ENCODE measurements at regions of chr18 and their contacts with region 1.

Region 1: GRCh38 chr18:158128-159036 is at the start of gene USP14:
- DNase-seq: peak; percentile 99 to 100 (median 100)
- ATAC-seq: peak; percentile 93
- H3K4me3 ChIP-seq: peak within 1 kb of the TSS; percentile 97
- H3K27ac ChIP-seq: peak within 1 kb of the TSS; percentile 94
- H3K4me1 ChIP-seq: peaks cover 19 to 25% of the 10 kb centered on the region in 2 experiments; a peak in 4 of 5 replicates
- H3K27me3 ChIP-seq: no peaks in the 10 kb centered on the region
- CTCF ChIP-seq: peak in 2 of 3 experiments; percentile 27 to 87; a peak in 4 of 6 replicates
- EP300 ChIP-seq: no peak; the same call in 1 of the 2 replicates
- POLR2A ChIP-seq: peak; percentile 90
- RAD21 ChIP-seq: peak; percentile 25 to 42; a peak in 3 of 4 replicates
- polyA plus RNA-seq, gene USP14: 34.4 to 40.3 TPM

Region 2: GRCh38 chr18:111292-112014 is 46.9 kb before region 1 on chr18:
- CTCF ChIA-PET with region 1: no interaction called
- POLR2A ChIA-PET with region 1: no interaction called
- in situ Hi-C with region 1: no loop called
- intact Hi-C with region 1: loop called (anchors 5 kb)
- DNase-seq: peak; percentile 83 to 91 (median 89)
- ATAC-seq: peak; percentile 84
- H3K4me3 ChIP-seq: peak overlapping the region; percentile 39
- H3K27ac ChIP-seq: peak overlapping the region; percentile 74; the same call in 2 of the 3 replicates
- H3K4me1 ChIP-seq: peaks cover 4 to 7% of the 10 kb centered on the region in 2 experiments; a peak in 3 of 5 replicates
- H3K27me3 ChIP-seq: no peaks in the 10 kb centered on the region
- CTCF ChIP-seq: peak in 1 of 3 experiments; percentile 51; a peak in 3 of 6 replicates
- EP300 ChIP-seq: no peak
- POLR2A ChIP-seq: no peak
- RAD21 ChIP-seq: no peak

Region 3: GRCh38 chr18:172361-172760 is 14.0 kb after region 1 on chr18:
- CTCF ChIA-PET with region 1: no interaction called
- POLR2A ChIA-PET with region 1: interaction called, 23 read pairs
- in situ Hi-C with region 1: no loop called
- intact Hi-C with region 1: no loop called
- DNase-seq: no peak
- ATAC-seq: no peak
- H3K4me3 ChIP-seq: no peak overlapping the region
- H3K27ac ChIP-seq: no peak overlapping the region
- H3K4me1 ChIP-seq: no peaks in the 10 kb centered on the region; a peak in 2 of 5 replicates
- H3K27me3 ChIP-seq: no peaks in the 10 kb centered on the region
- CTCF ChIP-seq: no peak
- EP300 ChIP-seq: no peak
- POLR2A ChIP-seq: no peak
- RAD21 ChIP-seq: no peak

Region 4: DNA sequence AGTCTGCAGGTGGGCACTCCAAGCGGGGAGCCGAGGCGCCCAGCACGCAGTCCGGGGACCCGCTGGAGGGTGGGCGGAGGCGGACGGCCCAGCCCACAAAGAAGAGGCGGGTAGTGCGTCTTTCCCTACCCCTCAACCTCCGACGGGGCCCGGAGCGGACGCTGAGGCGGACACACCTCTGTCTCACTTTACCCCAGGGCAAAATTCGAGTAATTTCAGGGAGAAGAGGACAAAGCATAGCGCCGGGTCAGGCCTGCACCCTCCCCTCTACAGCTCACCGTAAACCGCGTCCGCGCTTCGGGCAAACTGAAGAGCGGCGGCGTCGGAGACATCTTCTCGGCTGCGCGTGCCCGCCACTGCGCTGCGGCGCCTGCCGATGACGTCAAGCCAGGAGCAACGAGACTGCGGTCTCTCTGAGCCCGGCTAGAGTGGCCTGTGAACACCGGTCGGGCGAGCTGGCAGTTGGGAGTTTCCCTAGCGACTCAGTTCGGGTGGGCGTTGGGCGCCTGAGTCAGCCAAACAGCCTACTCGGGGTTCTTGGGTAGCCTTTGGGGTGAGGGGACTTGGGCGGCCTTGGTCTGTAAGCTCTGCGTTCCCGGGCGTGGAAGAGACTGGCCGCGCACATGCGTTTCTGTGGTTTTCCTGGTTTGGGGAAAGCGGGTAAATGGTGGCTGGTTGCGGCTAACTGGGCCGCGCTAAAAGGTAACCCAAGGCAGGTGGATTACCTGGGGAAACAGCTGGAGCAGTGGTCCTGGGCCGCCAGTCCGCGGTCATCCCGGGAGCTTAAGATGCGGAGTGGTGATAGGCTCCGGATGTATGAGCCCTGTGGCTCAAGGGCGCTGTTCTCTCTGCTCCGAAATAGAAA is 109.5 kb after region 1 on chr18 and contains the start of gene THOC1:
- CTCF ChIA-PET with region 1: no interaction called
- POLR2A ChIA-PET with region 1: interaction called, 4 read pairs
- in situ Hi-C with region 1: no loop called
- intact Hi-C with region 1: loop called (anchors 5 kb)
- DNase-seq: peak; percentile 92 to 96 (median 92)
- ATAC-seq: peak; percentile 90
- H3K4me3 ChIP-seq: peak within 1 kb of the TSS; percentile 80
- H3K27ac ChIP-seq: peak within 1 kb of the TSS; percentile 98
- H3K4me1 ChIP-seq: peaks cover 17 to 29% of the 10 kb centered on the region in 2 experiments
- H3K27me3 ChIP-seq: no peaks in the 10 kb centered on the region
- CTCF ChIP-seq: peak in 2 of 3 experiments; percentile 5 to 16; a peak in 1 of 6 replicates
- EP300 ChIP-seq: peak; percentile 71
- POLR2A ChIP-seq: peak; percentile 98
- RAD21 ChIP-seq: peak in 1 of 2 experiments; percentile 12; a peak in 2 of 4 replicates
- polyA plus RNA-seq, gene THOC1: 87.1 to 139 TPM